ENCODE measurements at regions of chr16 and their contacts with region 1.

Region 1: DNA sequence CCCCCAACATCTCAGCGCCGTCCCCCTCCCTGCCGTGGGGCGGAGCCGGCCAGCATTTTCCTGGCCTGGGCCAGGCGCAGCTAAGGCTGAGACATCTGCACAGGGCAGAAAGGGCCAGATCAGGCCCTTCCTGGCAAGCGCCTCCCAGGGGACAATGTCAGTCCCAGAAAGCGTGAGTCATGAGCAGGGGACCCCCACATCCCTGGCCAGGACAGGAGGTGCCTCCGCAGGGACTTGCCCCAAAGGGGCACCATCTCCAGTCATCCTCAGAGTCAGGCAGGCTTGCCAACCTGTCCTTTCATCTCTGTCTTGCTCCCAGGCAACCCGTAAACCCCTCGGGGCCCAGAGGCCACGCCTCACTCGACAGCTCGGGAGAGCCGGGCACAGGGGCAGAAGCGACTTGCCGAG is 43.2 kb downstream of the SOCS1 start:
- DNase-seq: no peak
- H3K4me3 ChIP-seq: no peak overlapping the region
- H3K27ac ChIP-seq: no peak overlapping the region
- H3K4me1 ChIP-seq: no peaks in the 10 kb centered on the region
- H3K27me3 ChIP-seq: no peaks in the 10 kb centered on the region
- CTCF ChIP-seq: no peak

Region 2: GRCh38 chr16:11091021-11091785 is 121.6 kb before region 1 on chr16:
- CTCF ChIA-PET with region 1: no interaction called
- POLR2A ChIA-PET with region 1: interaction called, 10 read pairs
- intact Hi-C with region 1: no loop called
- DNase-seq: no peak
- H3K4me3 ChIP-seq: no peak overlapping the region
- H3K27ac ChIP-seq: no peak overlapping the region
- H3K4me1 ChIP-seq: peaks cover 10% of the 10 kb centered on the region
- H3K27me3 ChIP-seq: no peaks in the 10 kb centered on the region
- CTCF ChIP-seq: no peak

Region 3: GRCh38 chr16:11118479-11118878 is 94.3 kb before region 1 on chr16:
- CTCF ChIA-PET with region 1: no interaction called
- POLR2A ChIA-PET with region 1: no interaction called
- intact Hi-C with region 1: no loop called
- DNase-seq: no peak
- H3K4me3 ChIP-seq: no peak overlapping the region
- H3K27ac ChIP-seq: no peak overlapping the region
- H3K4me1 ChIP-seq: peaks cover 12% of the 10 kb centered on the region
- H3K27me3 ChIP-seq: no peaks in the 10 kb centered on the region
- CTCF ChIP-seq: no peak

Measured in A673 (cell line).